ENCODE measurements at regions of chr4 and their contacts with region 1.

Region 1: GRCh38 chr4:154743683-154744340 is at the start of gene LRAT:
- DNase-seq: peak; percentile 89
- H3K4me3 ChIP-seq: peak within 1 kb of the TSS; percentile 63 to 76 (median 74)
- H3K27ac ChIP-seq: peak within 1 kb of the TSS; percentile 60
- H3K4me1 ChIP-seq: peaks cover 15% of the 10 kb centered on the region
- H3K27me3 ChIP-seq: no peaks in the 10 kb centered on the region
- CTCF ChIP-seq: peak; percentile 36 to 66
- total RNA-seq, gene LRAT: 16.6 to 22.2 TPM

Region 2: GRCh38 chr4:154677923-154678322 is 65.9 kb before region 1 on chr4:
- CTCF ChIA-PET with region 1: no interaction called
- dilution Hi-C with region 1: no loop called
- in situ Hi-C with region 1: no loop called
- intact Hi-C with region 1: no loop called
- DNase-seq: no peak
- H3K4me3 ChIP-seq: no peak overlapping the region
- H3K27ac ChIP-seq: no peak overlapping the region
- H3K4me1 ChIP-seq: no peaks in the 10 kb centered on the region
- H3K27me3 ChIP-seq: no peaks in the 10 kb centered on the region
- CTCF ChIP-seq: no peak

Region 3: GRCh38 chr4:154707877-154708276 is 35.9 kb before region 1 on chr4:
- CTCF ChIA-PET with region 1: interaction called, 3 read pairs
- dilution Hi-C with region 1: loop called (anchors 5 kb)
- in situ Hi-C with region 1: no loop called
- intact Hi-C with region 1: loop called (anchors 1 kb)
- DNase-seq: peak; percentile 100
- H3K4me3 ChIP-seq: no peak overlapping the region
- H3K27ac ChIP-seq: peak overlapping the region; percentile 100
- H3K4me1 ChIP-seq: peaks cover 31% of the 10 kb centered on the region
- H3K27me3 ChIP-seq: no peaks in the 10 kb centered on the region
- CTCF ChIP-seq: no peak

Region 4: GRCh38 chr4:154727540-154727939 is 16.3 kb before region 1 on chr4:
- CTCF ChIA-PET with region 1: no interaction called
- dilution Hi-C with region 1: no loop called
- in situ Hi-C with region 1: no loop called
- intact Hi-C with region 1: no loop called
- DNase-seq: no peak
- H3K4me3 ChIP-seq: no peak overlapping the region
- H3K27ac ChIP-seq: no peak overlapping the region
- H3K4me1 ChIP-seq: peaks cover 13% of the 10 kb centered on the region
- H3K27me3 ChIP-seq: no peaks in the 10 kb centered on the region
- CTCF ChIP-seq: no peak

Region 5: DNA sequence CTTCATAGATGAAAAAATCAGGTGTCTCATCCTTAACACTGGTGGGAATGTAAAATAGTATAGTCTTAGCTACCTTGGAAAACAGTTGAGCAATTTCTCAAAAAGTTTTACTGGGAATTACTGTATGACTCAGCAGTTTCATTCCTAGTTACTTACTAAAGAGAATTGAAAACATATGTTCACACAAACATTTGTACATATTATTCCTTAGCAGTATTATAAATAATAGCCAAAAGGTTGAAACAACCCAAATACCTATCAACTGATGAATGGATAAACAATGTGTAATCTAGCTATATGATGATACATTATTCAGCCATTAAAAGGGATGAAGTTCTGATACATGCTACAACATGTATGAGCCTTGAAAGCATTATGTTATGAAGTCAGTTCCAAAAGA is 79.0 kb after region 1 on chr4:
- CTCF ChIA-PET with region 1: no interaction called
- dilution Hi-C with region 1: no loop called
- in situ Hi-C with region 1: no loop called
- intact Hi-C with region 1: no loop called
- DNase-seq: peak; percentile 67
- H3K4me3 ChIP-seq: no peak overlapping the region
- H3K27ac ChIP-seq: peak overlapping the region; percentile 51
- H3K4me1 ChIP-seq: peaks cover 8% of the 10 kb centered on the region
- H3K27me3 ChIP-seq: no peaks in the 10 kb centered on the region
- CTCF ChIP-seq: no peak